ENCODE measurements at regions of chr20 and their contacts with region 1.

Region 1: GRCh38 chr20:47356526-47357295 is at the start of gene ZMYND8:
- DNase-seq: peak; percentile 86 to 99 (median 91)
- H3K4me3 ChIP-seq: peak within 1 kb of the TSS in 1 of 4 donors; percentile 49
- H3K27ac ChIP-seq: peak within 1 kb of the TSS; percentile 95 to 99 (median 98)
- H3K4me1 ChIP-seq: peaks cover 96 to 100% of the 10 kb centered on the region in 2 donors
- H3K27me3 ChIP-seq: no peaks in the 10 kb centered on the region
- CTCF ChIP-seq: no peak
- POLR2A ChIP-seq: peak in 1 of 2 donors; percentile 69
- total RNA-seq, gene ZMYND8: 42.9 to 116 (median 68.2) TPM

Region 2: DNA sequence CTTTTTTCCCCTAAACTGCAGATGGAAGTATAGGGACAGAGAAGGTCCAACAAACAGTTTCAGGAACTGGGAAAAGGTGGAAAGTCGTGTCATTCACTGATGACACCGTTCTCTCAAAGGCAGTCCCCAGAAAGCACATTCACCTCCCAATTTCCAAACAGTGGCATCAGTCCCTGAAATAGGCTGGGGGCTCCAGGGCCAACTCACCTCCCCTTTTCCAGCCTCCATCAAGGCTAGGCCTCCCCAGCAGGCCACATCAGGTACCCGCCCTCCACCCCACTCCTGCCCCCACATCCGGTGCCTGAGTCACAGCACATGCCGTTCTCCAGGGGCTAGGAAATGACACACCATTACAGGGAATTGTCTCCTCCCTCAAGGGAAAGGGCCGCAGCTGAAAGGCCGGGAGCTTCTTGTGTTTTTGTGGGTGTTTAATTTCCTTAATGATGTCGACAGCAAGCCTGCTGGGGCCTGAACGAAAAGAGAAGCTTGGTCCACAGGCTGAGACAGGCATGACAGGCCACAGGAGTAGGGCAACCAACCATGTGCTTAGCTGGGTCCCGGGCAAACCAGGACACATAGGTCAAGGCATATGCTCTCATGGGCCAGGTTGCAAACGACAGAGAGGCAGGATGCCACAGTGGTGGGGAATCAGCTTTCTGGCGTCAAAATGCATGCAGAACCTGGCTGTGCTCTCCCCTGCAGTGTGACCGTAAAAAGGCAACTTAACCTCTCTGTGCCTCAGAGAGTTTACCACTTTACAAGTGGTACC is 39.4 kb before region 1 on chr20:
- intact Hi-C with region 1: loop called in 1 of 2 experiments (anchors 5 kb)
- DNase-seq: peak; percentile 80 to 95 (median 89)
- H3K4me3 ChIP-seq: no peak overlapping the region
- H3K27ac ChIP-seq: peak overlapping the region; percentile 88 to 97 (median 97)
- H3K4me1 ChIP-seq: peaks cover 55 to 78% of the 10 kb centered on the region in 2 donors
- H3K27me3 ChIP-seq: no peaks in the 10 kb centered on the region
- CTCF ChIP-seq: peak in 3 of 6 experiments; percentile 18 to 33 (median 19)
- POLR2A ChIP-seq: peak in 1 of 2 donors; percentile 84

Region 3: DNA sequence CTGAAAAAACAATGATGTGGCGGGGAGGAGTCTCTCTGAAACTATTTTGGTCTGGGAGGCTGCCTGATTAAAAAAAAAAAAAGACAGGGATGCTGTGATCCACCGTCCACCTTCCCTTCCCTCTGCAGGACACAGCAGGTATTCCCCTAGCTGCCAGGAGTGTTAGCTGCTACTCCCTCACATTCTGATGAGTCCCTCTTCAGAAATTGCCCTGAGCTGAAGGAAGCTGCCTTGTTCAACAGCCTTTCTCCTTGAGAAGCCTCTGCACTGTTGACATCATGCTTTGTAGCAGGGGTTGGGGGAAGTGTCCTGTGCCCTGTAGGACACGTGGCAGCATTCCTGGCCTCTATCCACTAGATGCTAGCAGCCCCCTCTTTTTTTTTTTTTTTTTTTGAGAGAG is 71.5 kb after region 1 on chr20:
- intact Hi-C with region 1: no loop called
- DNase-seq: no peak
- H3K4me3 ChIP-seq: no peak overlapping the region
- H3K27ac ChIP-seq: no peak overlapping the region
- H3K4me1 ChIP-seq: no peaks in the 10 kb centered on the region
- H3K27me3 ChIP-seq: no peaks in the 10 kb centered on the region
- CTCF ChIP-seq: no peak
- POLR2A ChIP-seq: no peak